Right cardiac atrium (tissue), 5 donors: ENCODE measurements at regions of chr10 and their contacts with region 1.

Region 1: GRCh38 chr10:80498833-80499741 is 38.6 kb upstream of the SH2D4B start:
- DNase-seq: peak; percentile 94 to 96 (median 96)
- ATAC-seq: peak; percentile 91 to 92
- H3K4me3 ChIP-seq: no peak overlapping the region
- H3K27ac ChIP-seq: peak overlapping the region; percentile 79
- H3K4me1 ChIP-seq: peaks cover 62% of the 10 kb centered on the region
- H3K27me3 ChIP-seq: no peaks in the 10 kb centered on the region

Region 2: DNA sequence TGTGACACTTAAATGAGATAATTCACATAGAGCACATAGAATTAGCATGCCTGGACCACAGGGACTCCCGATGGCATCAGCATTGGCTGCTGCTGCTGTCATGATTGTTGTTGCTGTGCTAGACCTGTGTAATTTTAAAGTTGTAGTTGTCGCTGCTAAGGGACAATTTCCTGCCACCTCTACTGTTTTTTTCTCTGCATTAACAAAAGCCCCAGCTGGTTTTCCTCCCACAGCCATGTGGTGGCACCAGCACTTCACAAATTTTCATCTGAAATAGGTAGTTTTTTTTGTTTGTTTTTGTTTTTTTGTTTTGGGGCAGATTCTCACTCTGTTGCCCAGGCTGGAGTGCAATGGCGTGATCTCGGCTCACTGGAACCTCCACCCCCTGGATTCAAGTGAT is 116.1 kb before region 1 on chr10:
- intact Hi-C with region 1: loop called in 2 of 4 experiments (anchors 10 kb)
- DNase-seq: peak in 1 of 3 donors; percentile 52
- ATAC-seq: no peak
- H3K4me3 ChIP-seq: no peak overlapping the region
- H3K27ac ChIP-seq: no peak overlapping the region
- H3K4me1 ChIP-seq: no peaks in the 10 kb centered on the region
- H3K27me3 ChIP-seq: no peaks in the 10 kb centered on the region

Region 3: DNA sequence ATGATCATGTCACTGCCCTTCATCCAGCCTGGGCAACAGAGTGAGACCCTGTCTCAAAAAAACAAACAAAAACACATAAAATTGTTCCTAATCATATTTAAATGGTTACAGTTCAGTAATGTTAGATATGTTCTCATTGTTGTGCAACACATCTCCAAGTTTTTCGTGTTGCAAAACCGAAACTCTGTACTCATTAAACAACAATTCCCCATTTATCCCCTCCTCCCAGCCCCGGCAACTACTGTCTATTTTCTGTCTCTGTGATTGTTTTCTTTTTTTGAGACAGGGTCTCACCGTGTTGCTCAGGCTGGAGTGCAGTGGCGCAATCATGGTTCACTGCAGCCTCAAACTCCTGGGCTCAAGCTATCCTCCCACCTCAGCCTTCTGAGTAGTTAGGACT is 106.8 kb before region 1 on chr10:
- intact Hi-C with region 1: loop called in 3 of 4 experiments (anchors 5 to 10 kb)
- DNase-seq: no peak
- ATAC-seq: no peak
- H3K4me3 ChIP-seq: no peak overlapping the region
- H3K27ac ChIP-seq: no peak overlapping the region
- H3K4me1 ChIP-seq: peaks cover 3% of the 10 kb centered on the region
- H3K27me3 ChIP-seq: no peaks in the 10 kb centered on the region

Region 4: GRCh38 chr10:80459047-80459931 is 39.8 kb before region 1 on chr10:
- intact Hi-C with region 1: loop called in 2 of 4 experiments (anchors 5 kb)
- DNase-seq: peak; percentile 74 to 83 (median 83)
- ATAC-seq: peak; percentile 50 to 54
- H3K4me3 ChIP-seq: peak overlapping the region; percentile 12
- H3K27ac ChIP-seq: peak overlapping the region; percentile 87
- H3K4me1 ChIP-seq: peaks cover 41% of the 10 kb centered on the region
- H3K27me3 ChIP-seq: no peaks in the 10 kb centered on the region